ENCODE measurements at regions of chr10 and their contacts with region 1.

Region 1: DNA sequence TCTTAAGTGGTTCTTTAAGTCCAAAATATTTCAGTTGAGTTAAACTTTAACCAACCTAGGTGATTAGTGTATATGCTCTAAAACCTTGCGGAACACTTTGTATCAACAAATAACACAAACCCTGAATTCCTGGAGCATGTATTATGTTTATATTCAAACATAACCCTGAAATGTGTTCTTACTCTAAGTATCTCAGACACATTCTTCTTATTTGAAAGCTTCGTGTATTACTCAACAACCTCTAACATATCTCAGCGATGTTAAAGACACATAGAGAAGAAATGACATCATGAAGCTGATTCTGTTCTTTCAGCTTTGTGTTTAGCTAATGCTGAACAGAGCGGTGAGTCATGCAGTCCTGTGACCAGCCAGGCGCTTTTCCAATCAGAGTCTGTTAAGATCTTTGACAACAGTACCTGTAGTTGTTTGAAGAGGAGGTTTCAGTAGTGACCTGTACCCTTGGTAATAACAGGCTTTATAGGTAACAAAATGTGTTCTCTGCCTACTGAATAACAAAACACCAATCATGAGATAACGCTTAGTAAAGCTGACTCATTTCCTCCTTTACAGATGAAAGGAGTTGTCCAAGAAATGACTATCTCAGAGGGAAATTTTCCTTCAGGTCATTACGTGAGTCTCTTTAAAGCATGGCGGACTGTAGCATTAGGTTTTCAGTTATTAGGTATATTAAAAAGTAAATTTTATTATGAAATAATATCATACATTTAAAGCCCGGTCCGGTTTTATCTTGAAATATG is 67.3 kb upstream of the KLF6 start:
- DNase-seq: no peak
- H3K4me3 ChIP-seq: no peak overlapping the region
- H3K27ac ChIP-seq: no peak overlapping the region
- H3K4me1 ChIP-seq: peaks cover 12% of the 10 kb centered on the region
- CTCF ChIP-seq: no peak

Region 2: DNA sequence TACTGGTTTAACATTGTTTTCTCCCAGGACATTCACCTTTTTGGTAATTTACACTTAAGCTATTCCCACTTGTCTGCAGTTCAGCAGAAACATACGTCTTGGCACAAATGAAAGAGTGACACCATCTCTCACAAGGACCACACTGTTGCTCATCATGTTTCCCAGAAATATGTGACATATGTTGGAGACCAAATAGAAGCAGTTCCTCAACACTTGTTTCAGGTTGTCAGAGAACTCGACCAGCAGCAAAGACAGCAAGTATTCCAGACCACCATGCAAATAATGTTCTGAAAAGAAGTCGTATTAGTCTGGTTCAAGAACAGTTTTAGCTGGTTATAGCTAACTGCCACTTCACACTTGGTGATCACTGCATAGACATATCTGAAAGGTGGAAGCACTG is 14.0 kb after region 1 on chr10:
- CTCF ChIA-PET with region 1: no interaction called
- POLR2A ChIA-PET with region 1: interaction called, 10 read pairs
- intact Hi-C with region 1: no loop called
- DNase-seq: peak; percentile 23
- H3K4me3 ChIP-seq: peak overlapping the region; percentile 5
- H3K27ac ChIP-seq: peak overlapping the region; percentile 33
- H3K4me1 ChIP-seq: peaks cover 46% of the 10 kb centered on the region
- CTCF ChIP-seq: no peak

Measured in OCI-LY7 (cell line).